Endothelial cell of umbilical vein (primary cell): ENCODE measurements at regions of chr18 and their contacts with region 1.

Region 1: DNA sequence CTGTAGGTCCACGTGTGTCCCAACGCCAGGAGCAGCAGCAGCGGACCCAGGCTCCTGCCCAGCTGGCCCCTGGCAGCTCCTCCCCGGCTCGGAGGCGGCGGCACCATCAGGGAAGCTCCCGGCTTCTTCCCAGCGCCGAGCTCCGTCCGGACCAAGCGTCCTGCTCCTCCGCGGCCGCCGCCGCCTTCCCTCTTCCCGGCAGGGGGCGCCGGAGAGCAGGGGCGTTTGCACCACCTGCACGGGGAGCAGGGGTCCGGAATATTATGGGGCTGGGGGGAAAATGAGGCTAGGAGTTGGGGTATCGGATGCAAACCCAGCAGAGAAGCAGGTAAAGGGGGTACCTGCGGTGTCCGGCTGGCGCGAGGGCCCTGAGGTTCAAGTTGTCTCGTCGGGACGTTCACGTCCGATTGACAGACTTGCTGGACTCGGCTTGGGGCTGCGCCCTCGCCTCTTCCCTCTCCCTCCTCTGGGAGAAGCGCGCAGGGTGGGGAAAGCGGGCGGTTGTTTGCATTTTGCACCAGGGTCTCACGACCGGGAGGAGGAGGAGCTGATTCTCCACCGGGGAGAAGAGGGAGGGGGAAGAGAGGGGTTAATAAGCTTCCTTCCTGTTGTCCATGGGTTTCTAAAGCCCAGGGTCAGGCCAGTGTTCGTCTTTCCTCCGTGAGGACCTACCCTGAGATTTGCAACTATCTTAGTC is at the start of gene CCBE1:
- DNase-seq: peak; percentile 34
- H3K4me3 ChIP-seq: peak within 1 kb of the TSS in 1 of 3 experiments; percentile 8
- H3K27ac ChIP-seq: no peak within 1 kb of the TSS
- H3K4me1 ChIP-seq: peaks cover 2% of the 10 kb centered on the region
- H3K27me3 ChIP-seq: peaks cover 29 to 35% of the 10 kb centered on the region in 2 experiments
- CTCF ChIP-seq: peak; percentile 72 to 91
- POLR2A ChIP-seq: no peak
- total RNA-seq, gene CCBE1: not detected in 2 replicates

Region 2: GRCh38 chr18:59646228-59646962 is 51.0 kb before region 1 on chr18:
- CTCF ChIA-PET with region 1: interaction called, 12 read pairs
- POLR2A ChIA-PET with region 1: no interaction called
- dilution Hi-C with region 1: no loop called
- intact Hi-C with region 1: no loop called
- DNase-seq: no peak
- H3K4me3 ChIP-seq: no peak overlapping the region
- H3K27ac ChIP-seq: no peak overlapping the region
- H3K4me1 ChIP-seq: no peaks in the 10 kb centered on the region
- H3K27me3 ChIP-seq: no peaks in the 10 kb centered on the region
- CTCF ChIP-seq: no peak
- POLR2A ChIP-seq: no peak

Region 3: DNA sequence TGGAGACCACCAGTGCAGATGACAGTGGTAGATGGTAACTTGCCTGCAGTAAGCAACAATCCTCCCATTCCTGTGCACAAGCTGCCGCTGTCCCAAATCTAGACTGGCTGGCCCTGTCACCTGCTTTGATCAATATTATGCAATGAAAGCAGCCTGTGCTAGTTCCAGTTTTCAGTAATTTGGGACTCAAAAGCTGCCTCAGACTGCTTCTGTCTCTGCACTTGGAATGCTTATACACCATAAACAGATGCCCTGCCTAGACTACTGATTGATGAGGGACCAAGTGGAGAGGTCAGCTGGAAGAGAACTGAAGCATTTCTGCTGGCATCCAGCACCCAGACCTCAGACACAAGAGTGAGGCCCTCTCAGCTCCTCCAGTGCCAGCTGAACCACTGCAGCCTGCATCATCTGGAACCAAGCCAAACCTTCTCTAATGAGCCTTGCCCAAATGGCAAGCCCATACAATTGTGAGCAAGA is 25.1 kb before region 1 on chr18:
- CTCF ChIA-PET with region 1: interaction called, 16 read pairs
- POLR2A ChIA-PET with region 1: no interaction called
- dilution Hi-C with region 1: no loop called
- intact Hi-C with region 1: no loop called
- DNase-seq: no peak
- H3K4me3 ChIP-seq: no peak overlapping the region
- H3K27ac ChIP-seq: no peak overlapping the region
- H3K4me1 ChIP-seq: no peaks in the 10 kb centered on the region
- H3K27me3 ChIP-seq: no peaks in the 10 kb centered on the region
- CTCF ChIP-seq: no peak
- POLR2A ChIP-seq: no peak

Region 4: DNA sequence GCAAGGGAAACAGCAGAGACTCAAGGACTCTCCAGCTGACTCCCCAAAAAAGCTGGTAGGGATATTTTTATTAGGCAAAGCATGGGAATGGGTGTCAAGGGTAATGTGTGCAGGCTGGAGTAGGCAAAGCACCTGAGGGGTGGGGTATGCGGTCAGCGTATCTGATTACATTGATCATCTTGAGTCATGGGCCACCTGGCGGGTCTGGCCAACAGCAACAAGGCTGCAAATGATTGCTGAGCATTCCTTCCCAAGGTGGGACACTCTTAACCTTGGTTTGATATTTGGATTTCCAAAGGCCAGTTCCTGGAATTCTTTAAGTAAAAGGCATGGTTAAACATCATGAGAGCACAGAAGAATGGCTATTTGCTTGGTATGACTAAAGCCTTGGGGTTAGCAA is 32.4 kb after region 1 on chr18:
- CTCF ChIA-PET with region 1: interaction called, 11 read pairs
- POLR2A ChIA-PET with region 1: no interaction called
- dilution Hi-C with region 1: no loop called
- intact Hi-C with region 1: no loop called
- DNase-seq: no peak
- H3K4me3 ChIP-seq: no peak overlapping the region
- H3K27ac ChIP-seq: no peak overlapping the region
- H3K4me1 ChIP-seq: no peaks in the 10 kb centered on the region
- H3K27me3 ChIP-seq: no peaks in the 10 kb centered on the region
- CTCF ChIP-seq: no peak
- POLR2A ChIP-seq: no peak

Region 5: GRCh38 chr18:59769129-59769865 is 71.9 kb after region 1 on chr18:
- CTCF ChIA-PET with region 1: interaction called, 12 read pairs
- POLR2A ChIA-PET with region 1: no interaction called
- dilution Hi-C with region 1: no loop called
- intact Hi-C with region 1: no loop called
- DNase-seq: no peak
- H3K4me3 ChIP-seq: no peak overlapping the region
- H3K27ac ChIP-seq: no peak overlapping the region
- H3K4me1 ChIP-seq: no peaks in the 10 kb centered on the region
- H3K27me3 ChIP-seq: no peaks in the 10 kb centered on the region
- CTCF ChIP-seq: no peak
- POLR2A ChIP-seq: no peak

Region 6: DNA sequence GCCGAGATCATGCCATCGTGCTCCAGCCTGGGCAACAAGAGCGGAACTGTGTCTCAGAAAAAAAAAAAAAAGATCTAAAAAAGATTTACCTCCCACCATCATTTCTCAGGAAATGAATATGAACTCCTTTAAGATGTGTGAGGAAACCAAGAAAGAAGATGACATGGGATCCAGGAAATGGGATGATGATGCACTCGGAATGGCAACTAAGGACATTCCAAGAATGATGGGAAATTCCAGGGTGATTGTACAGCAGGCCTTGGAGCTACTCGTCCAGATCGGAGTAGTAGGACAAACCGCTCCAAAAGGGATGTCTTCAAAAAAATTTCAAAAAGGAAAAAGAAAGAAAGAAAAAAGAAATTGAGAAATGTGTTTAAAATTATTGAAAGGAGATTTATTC is 117.5 kb after region 1 on chr18:
- CTCF ChIA-PET with region 1: interaction called, 21 read pairs
- POLR2A ChIA-PET with region 1: no interaction called
- dilution Hi-C with region 1: no loop called
- intact Hi-C with region 1: no loop called
- DNase-seq: no peak
- H3K4me3 ChIP-seq: no peak overlapping the region
- H3K27ac ChIP-seq: no peak overlapping the region
- H3K4me1 ChIP-seq: no peaks in the 10 kb centered on the region
- H3K27me3 ChIP-seq: no peaks in the 10 kb centered on the region
- CTCF ChIP-seq: no peak
- POLR2A ChIP-seq: no peak